ENCODE measurements at regions of chr5 and their contacts with region 1.

Region 1: GRCh38 chr5:76601470-76601869 is 21.7 kb downstream of the F2RL2 start:
- DNase-seq: no peak
- ATAC-seq: peak; percentile 72

Region 2: DNA sequence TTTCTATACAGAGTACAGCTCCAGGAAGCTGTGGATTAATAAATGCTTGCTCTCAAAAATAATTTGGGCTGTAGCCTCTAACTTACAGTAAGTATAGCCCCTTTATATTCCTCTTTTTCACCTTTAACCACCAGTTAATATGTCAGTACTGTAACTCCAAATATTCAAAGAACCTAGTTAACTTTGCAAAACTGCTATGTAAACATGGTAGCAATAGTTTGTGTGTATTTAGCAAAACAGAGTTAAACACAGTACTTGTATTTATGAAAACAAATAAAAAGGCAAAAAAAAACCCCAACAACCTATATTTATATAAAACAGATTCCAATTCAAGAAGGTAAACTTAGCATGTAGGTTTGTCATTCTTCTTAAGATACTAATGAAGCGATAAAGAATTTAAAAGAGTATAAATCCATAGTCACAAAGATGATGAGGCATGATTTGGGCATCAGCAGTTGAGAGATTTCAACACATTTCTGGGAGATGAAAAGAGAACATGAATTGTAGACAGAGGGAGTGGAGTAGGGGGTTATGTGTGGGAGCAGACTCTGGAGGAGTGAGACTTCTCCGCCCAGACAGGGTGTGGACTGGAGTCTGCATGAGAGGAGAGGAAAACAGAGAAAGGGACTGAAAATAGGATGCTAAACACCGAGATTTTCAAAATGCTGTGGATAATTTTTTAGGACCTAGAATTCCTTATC is 170.4 kb after region 1 on chr5:
- intact Hi-C with region 1: loop called (anchors 10 kb)
- DNase-seq: no peak
- ATAC-seq: no peak

Region 3: GRCh38 chr5:77066823-77067442 is 465.5 kb after region 1 on chr5:
- intact Hi-C with region 1: no loop called
- DNase-seq: no peak
- ATAC-seq: peak; percentile 71

Region 4: DNA sequence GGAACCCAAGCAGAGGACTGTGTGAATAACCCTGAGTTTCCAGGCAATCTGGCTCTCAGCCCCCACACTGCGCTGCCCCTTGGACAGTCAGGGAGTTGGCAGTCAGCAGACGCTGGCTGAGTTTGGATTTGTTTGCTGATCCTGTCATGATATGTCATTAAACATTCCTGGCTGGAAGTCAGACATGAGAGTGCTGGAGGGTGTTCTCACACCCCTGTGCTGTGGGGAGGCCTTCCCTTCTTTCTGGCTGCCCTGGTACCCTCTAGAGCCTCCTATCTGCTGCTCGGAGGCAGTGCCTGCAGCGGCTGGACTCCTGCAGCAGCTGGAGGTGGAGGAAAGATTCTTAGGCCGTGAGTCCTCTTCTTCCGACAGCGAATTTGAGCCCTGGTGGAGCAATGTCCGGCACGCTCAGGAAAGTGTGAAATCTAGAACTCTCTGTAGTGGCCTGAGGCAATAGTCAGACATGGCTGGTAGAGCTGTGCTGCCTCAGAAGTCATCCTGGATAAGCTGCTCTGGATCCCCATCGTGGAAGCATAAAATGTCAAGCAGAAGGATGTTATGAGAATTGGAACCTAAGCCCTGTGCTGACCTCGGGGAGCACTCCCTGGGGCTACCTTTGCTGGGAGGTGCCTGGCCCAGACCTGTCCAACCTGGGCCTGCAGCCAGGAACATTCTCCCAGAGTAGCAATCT is 681.0 kb after region 1 on chr5:
- intact Hi-C with region 1: no loop called
- DNase-seq: no peak
- ATAC-seq: no peak